ENCODE measurements at regions of chr12 and their contacts with region 1.

Region 1: GRCh38 chr12:11595080-11595479 is 54.4 kb upstream of the ETV6 start:
- DNase-seq: no peak
- ATAC-seq: no peak
- H3K4me3 ChIP-seq: no peak overlapping the region
- H3K27ac ChIP-seq: no peak overlapping the region
- H3K4me1 ChIP-seq: no peaks in the 10 kb centered on the region
- H3K27me3 ChIP-seq: peaks cover 10% of the 10 kb centered on the region
- CTCF ChIP-seq: no peak
- POLR2A ChIP-seq: no peak
- RAD21 ChIP-seq: no peak

Region 2: GRCh38 chr12:10873378-10873777 is 721.7 kb before region 1 on chr12:
- CTCF ChIA-PET with region 1: no interaction called
- POLR2A ChIA-PET with region 1: no interaction called
- dilution Hi-C with region 1: no loop called
- in situ Hi-C with region 1: no loop called
- intact Hi-C with region 1: no loop called
- DNase-seq: peak; percentile 35
- ATAC-seq: 0 out of 2 replicates have a peak, but pooled peaks have one; percentile 24
- H3K4me3 ChIP-seq: no peak overlapping the region
- H3K27ac ChIP-seq: no peak overlapping the region
- H3K4me1 ChIP-seq: no peaks in the 10 kb centered on the region
- H3K27me3 ChIP-seq: no peaks in the 10 kb centered on the region
- CTCF ChIP-seq: no peak
- POLR2A ChIP-seq: no peak
- RAD21 ChIP-seq: no peak

Region 3: DNA sequence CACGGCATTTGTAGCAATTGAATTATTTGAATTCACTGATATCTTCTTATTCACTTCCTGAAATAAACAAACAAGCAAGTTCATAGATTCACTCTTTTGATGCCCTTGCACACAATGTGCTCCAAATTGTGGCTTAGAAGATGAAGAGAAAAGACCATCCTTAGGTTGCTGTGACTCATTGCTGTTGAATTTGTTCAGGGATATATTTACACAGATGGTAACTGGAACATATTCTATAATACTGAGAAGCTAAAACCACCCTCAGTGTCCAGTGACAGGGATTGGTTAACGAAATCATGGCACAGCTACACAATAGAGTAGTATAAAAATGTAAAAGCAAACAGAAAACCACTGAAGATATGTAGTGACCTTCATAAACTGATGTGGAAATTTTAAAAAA is 287.9 kb before region 1 on chr12:
- CTCF ChIA-PET with region 1: no interaction called
- POLR2A ChIA-PET with region 1: no interaction called
- dilution Hi-C with region 1: no loop called
- in situ Hi-C with region 1: no loop called
- intact Hi-C with region 1: no loop called
- DNase-seq: no peak
- ATAC-seq: no peak
- H3K4me3 ChIP-seq: no peak overlapping the region
- H3K27ac ChIP-seq: no peak overlapping the region
- H3K4me1 ChIP-seq: no peaks in the 10 kb centered on the region
- H3K27me3 ChIP-seq: no peaks in the 10 kb centered on the region
- CTCF ChIP-seq: no peak
- POLR2A ChIP-seq: no peak
- RAD21 ChIP-seq: no peak

Region 4: DNA sequence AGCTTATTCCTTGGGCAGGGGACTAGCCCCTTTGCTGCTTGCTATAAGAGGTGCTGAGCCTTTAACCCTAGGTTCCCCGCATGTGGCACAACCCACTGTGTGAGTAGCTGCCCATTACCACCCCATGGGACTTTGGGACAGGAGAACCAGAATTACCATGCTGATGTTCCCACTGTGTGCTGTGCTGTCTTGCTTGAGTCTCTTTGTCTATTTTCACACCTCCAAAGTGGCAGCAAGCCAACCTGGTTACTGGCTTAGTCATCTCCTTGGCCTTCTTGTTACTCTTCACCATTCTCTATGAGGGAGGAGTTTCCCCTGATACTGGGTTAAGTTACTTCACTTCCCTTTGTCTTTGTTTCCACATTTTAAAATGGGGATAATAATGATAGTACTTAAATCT is 19.0 kb before region 1 on chr12:
- CTCF ChIA-PET with region 1: interaction called, 3 read pairs
- POLR2A ChIA-PET with region 1: interaction called, 14 read pairs
- dilution Hi-C with region 1: no loop called
- in situ Hi-C with region 1: no loop called
- intact Hi-C with region 1: no loop called
- DNase-seq: peak; percentile 48
- ATAC-seq: peak; percentile 14; the same call in 1 of the 2 replicates
- H3K4me3 ChIP-seq: no peak overlapping the region
- H3K27ac ChIP-seq: no peak overlapping the region
- H3K4me1 ChIP-seq: peaks cover 9% of the 10 kb centered on the region
- H3K27me3 ChIP-seq: peaks cover 7% of the 10 kb centered on the region
- CTCF ChIP-seq: no peak
- POLR2A ChIP-seq: no peak
- RAD21 ChIP-seq: no peak

Region 5: GRCh38 chr12:11630046-11630706 is 35.1 kb after region 1 on chr12:
- CTCF ChIA-PET with region 1: no interaction called
- POLR2A ChIA-PET with region 1: no interaction called
- dilution Hi-C with region 1: no loop called
- in situ Hi-C with region 1: no loop called
- intact Hi-C with region 1: loop called (anchors 5 kb)
- DNase-seq: no peak
- ATAC-seq: no peak
- H3K4me3 ChIP-seq: no peak overlapping the region
- H3K27ac ChIP-seq: no peak overlapping the region
- H3K4me1 ChIP-seq: no peaks in the 10 kb centered on the region
- H3K27me3 ChIP-seq: no peaks in the 10 kb centered on the region
- CTCF ChIP-seq: no peak
- POLR2A ChIP-seq: no peak
- RAD21 ChIP-seq: no peak

Measured in IMR-90 (cell line).